ENCODE measurements at regions of chr6 and their contacts with region 1.

Region 1: DNA sequence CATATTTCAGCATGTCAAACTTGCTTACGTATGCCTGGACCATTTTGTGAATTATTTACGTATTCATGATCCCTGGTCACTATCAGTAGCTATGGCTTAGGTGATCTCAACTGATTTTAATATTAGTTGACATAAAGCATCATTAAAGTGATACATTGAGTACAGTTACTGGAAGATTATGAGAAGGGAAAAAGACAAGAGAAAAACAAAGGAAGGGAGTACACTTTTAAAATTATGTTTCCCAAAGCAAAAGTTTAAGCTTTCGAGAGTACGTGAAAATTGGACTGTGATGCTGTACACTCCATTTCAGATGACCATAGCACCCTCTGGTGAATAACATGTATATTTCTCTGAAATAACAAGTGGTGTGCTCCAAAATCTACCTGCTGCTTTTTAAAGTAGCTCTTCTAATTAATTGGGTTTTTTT is 215.0 kb upstream of the HSF2 start:
- DNase-seq: no peak
- ATAC-seq: peak; percentile 72 to 73

Region 2: GRCh38 chr6:121319112-121319553 is 865.3 kb before region 1 on chr6:
- intact Hi-C with region 1: loop called in 1 of 2 experiments (anchors 10 kb)
- DNase-seq: no peak
- ATAC-seq: no peak

Region 3: GRCh38 chr6:121430514-121431460 is 753.6 kb before region 1 on chr6:
- intact Hi-C with region 1: loop called in 1 of 2 experiments (anchors 1 kb)
- DNase-seq: no peak
- ATAC-seq: peak; percentile 21 to 38

Region 4: GRCh38 chr6:121849477-121849876 is 334.9 kb before region 1 on chr6:
- intact Hi-C with region 1: loop called in 1 of 2 experiments (anchors 10 kb)
- DNase-seq: peak; percentile 48
- ATAC-seq: peak; percentile 89 to 94

Region 5: GRCh38 chr6:121932076-121932991 is 252.1 kb before region 1 on chr6:
- intact Hi-C with region 1: no loop called
- DNase-seq: peak; percentile 55
- ATAC-seq: peak; percentile 94 to 97

Region 6: DNA sequence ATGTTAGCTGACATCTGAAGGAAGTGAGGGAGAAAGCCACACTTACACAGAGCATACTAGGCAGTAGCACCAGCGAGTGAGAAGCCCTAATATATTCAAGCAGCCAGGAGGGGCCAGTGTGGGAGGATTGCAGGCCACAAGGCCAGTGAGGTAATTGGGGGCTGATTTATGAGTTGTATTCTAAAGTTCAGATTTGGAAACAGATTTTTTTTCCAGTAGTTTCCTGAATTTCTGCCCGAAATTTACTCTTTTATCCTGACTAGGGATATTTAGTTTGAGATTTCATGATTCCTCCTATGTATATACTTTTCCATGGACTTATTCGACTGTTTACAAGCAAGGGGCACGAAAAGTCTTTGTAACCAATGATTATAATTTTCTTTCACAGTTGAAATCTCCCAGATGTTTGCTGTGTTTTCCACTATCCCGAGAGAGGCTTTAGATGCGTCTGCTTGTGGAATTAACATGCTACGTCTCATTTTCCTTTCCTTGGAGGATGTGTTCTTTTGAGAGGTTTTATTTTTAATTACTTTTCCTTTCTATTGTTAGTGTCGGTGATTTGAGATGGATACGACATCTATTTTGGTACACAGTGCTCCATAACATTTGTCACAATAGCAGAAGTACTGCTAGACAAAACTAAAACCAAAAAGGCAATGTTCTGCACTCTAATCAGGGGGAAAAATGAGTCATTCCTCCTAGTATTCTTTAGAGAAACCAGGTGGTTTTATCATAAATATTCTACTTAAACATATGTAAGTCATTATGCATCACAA is 141.3 kb before region 1 on chr6:
- intact Hi-C with region 1: loop called in 1 of 2 experiments (anchors 5 kb)
- DNase-seq: no peak
- ATAC-seq: peak; percentile 32 to 44

Region 7: GRCh38 chr6:122068291-122068769 is 116.1 kb before region 1 on chr6:
- intact Hi-C with region 1: no loop called
- DNase-seq: no peak
- ATAC-seq: peak; percentile 72

Region 8: GRCh38 chr6:122449069-122449468 is 264.7 kb after region 1 on chr6:
- intact Hi-C with region 1: no loop called
- DNase-seq: no peak
- ATAC-seq: no peak